BJ (cell line): ENCODE measurements at regions of chr12 and their contacts with region 1.

Region 1: GRCh38 chr12:47963340-47964040 is at the start of gene TMEM106C:
- DNase-seq: peak; percentile 31
- H3K4me3 ChIP-seq: peak within 1 kb of the TSS; percentile 93
- H3K27me3 ChIP-seq: peaks cover 4% of the 10 kb centered on the region; the same call in 1 of the 2 replicates
- CTCF ChIP-seq: peak; percentile 100
- polyA plus RNA-seq, gene TMEM106C: 188 and 217 TPM in 2 replicates

Region 2: GRCh38 chr12:47517122-47517521 is 446.4 kb before region 1 on chr12:
- CTCF ChIA-PET with region 1: no interaction called
- POLR2A ChIA-PET with region 1: no interaction called
- DNase-seq: no peak
- H3K4me3 ChIP-seq: no peak overlapping the region
- H3K27me3 ChIP-seq: no peaks in the 10 kb centered on the region
- CTCF ChIP-seq: no peak

Region 3: DNA sequence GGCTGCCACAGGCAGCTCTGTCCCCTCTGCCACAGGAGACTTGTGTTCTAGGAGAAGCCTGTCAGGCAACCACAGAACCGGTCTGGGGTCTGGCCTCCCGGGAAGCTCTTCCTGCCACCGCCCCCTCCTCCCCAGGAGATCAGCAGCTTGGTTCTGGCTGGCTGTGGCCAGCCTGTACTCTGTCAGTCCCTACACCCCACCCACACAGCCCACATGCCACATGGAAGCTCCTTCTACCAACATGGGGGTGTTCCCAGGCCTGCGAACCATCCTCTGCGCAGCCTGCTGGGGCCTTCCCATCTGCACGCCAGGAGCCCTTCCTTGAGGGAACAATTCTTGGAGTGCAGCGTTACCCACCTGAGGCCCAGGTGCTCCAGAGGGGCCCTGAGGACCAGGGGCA is 16.7 kb after region 1 on chr12:
- CTCF ChIA-PET with region 1: interaction called, 10 read pairs
- POLR2A ChIA-PET with region 1: no interaction called
- DNase-seq: no peak
- H3K4me3 ChIP-seq: no peak overlapping the region
- H3K27me3 ChIP-seq: peaks cover 9% of the 10 kb centered on the region
- CTCF ChIP-seq: no peak

Region 4: GRCh38 chr12:47990351-47991105 is 27.0 kb after region 1 on chr12:
- CTCF ChIA-PET with region 1: no interaction called
- POLR2A ChIA-PET with region 1: no interaction called
- DNase-seq: no peak
- H3K4me3 ChIP-seq: no peak overlapping the region
- H3K27me3 ChIP-seq: peaks cover 21% of the 10 kb centered on the region
- CTCF ChIP-seq: no peak